ENCODE measurements at regions of chr9 and their contacts with region 1.

Region 1: GRCh38 chr9:35267710-35268109 is 105.9 kb downstream of the UNC13B start:
- DNase-seq: no peak
- H3K4me3 ChIP-seq: no peak overlapping the region
- H3K27ac ChIP-seq: no peak overlapping the region
- H3K4me1 ChIP-seq: no peaks in the 10 kb centered on the region
- CTCF ChIP-seq: no peak

Region 2: GRCh38 chr9:35237311-35237710 is 30.4 kb before region 1 on chr9:
- CTCF ChIA-PET with region 1: no interaction called
- POLR2A ChIA-PET with region 1: no interaction called
- intact Hi-C with region 1: no loop called
- DNase-seq: no peak
- H3K4me3 ChIP-seq: no peak overlapping the region
- H3K27ac ChIP-seq: no peak overlapping the region
- H3K4me1 ChIP-seq: no peaks in the 10 kb centered on the region
- CTCF ChIP-seq: no peak

Region 3: DNA sequence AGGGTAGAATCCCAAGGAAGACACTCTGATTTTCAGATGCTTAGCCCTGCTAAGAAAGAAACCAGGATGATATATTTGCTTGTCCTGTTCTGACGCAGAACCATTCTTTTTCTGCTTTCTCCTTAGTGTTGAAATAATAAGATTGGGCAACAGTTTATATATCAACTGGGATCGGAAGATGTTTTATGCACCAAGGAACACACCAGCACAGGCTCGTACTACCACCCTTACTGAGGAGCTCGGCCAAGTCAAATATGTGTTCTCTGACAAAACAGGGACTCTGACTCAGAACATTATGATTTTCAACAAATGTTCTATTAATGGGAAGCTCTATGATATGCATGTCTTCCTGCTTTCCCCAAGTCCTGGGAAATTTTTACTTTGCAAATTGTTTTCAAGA is 203.2 kb after region 1 on chr9:
- CTCF ChIA-PET with region 1: no interaction called
- POLR2A ChIA-PET with region 1: no interaction called
- intact Hi-C with region 1: loop called (anchors 10 kb)
- DNase-seq: no peak
- H3K4me3 ChIP-seq: no peak overlapping the region
- H3K27ac ChIP-seq: no peak overlapping the region
- H3K4me1 ChIP-seq: no peaks in the 10 kb centered on the region
- CTCF ChIP-seq: no peak

Region 4: DNA sequence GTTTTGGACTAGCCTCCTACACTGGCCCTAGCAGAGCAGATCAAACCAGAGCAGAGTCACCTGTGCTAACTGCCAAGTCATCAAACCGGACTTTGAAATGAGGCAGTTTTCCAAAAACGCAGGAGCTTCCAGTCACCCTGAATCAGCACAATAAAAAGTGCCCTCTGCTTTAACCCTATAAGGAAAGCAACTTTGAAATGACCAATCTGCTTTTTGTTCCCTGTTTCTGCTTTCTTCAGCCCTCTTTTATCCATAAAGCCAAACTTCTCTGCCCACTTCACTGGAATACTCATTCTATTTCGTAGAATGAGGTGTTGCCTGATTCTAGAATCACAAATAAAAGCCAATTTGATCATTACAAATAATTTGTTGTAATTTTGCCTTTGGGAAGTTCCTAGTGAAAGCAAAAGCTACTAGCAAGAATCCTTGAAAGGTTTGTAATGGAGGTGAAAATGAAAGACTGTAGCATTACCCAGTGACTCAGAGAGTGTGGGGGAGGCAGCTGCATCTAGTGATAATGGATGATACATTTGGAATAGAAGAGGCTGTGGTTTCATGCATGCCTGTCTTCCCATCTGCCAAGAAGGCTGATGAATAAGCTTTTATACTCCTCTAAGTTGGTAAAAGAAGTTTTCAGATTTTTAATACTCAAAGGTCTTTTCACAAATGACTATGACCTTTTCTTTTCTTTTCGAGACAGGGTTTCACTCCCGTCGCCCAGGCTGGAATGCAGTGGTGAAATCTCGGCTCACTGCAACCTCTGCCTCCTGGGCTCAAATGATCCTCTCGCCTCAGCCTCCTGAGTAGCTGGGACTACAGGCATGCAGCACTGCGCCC is 656.4 kb after region 1 on chr9:
- CTCF ChIA-PET with region 1: no interaction called
- POLR2A ChIA-PET with region 1: no interaction called
- intact Hi-C with region 1: no loop called
- DNase-seq: no peak
- H3K4me3 ChIP-seq: no peak overlapping the region
- H3K27ac ChIP-seq: no peak overlapping the region
- H3K4me1 ChIP-seq: no peaks in the 10 kb centered on the region
- CTCF ChIP-seq: no peak

Region 5: DNA sequence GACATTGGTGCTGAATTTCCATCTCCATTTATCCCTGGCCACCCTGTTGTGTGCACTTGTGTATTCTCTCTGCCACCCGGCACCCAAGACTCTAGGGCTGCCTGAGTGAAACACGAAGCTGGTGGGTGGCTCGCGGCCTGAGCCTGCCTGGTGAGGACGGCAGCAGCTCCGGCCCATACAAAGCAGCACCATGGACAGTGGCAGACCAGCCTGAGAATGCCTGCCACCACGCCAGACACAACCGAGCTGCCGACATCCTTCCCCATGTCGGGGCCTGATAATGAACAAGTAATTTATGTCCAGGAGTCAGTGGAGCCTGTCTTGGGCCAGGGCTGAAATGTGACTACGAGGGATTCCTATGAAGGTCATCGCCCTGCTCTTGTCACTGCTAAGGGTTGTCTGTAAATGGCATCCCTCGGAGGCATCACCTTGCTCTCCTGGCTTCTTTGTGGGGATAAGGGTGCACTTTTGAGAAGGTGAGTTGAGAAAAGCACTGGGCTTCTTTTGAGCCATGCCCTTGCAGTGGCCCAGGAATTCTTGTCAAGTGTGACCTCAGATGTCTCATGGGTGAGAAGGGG is 1480.7 kb after region 1 on chr9:
- CTCF ChIA-PET with region 1: no interaction called
- POLR2A ChIA-PET with region 1: no interaction called
- intact Hi-C with region 1: no loop called
- DNase-seq: peak; percentile 47
- H3K4me3 ChIP-seq: no peak overlapping the region
- H3K27ac ChIP-seq: no peak overlapping the region
- H3K4me1 ChIP-seq: peaks cover 14% of the 10 kb centered on the region
- CTCF ChIP-seq: no peak